ENCODE measurements at regions of chr16 and their contacts with region 1.

Region 1: DNA sequence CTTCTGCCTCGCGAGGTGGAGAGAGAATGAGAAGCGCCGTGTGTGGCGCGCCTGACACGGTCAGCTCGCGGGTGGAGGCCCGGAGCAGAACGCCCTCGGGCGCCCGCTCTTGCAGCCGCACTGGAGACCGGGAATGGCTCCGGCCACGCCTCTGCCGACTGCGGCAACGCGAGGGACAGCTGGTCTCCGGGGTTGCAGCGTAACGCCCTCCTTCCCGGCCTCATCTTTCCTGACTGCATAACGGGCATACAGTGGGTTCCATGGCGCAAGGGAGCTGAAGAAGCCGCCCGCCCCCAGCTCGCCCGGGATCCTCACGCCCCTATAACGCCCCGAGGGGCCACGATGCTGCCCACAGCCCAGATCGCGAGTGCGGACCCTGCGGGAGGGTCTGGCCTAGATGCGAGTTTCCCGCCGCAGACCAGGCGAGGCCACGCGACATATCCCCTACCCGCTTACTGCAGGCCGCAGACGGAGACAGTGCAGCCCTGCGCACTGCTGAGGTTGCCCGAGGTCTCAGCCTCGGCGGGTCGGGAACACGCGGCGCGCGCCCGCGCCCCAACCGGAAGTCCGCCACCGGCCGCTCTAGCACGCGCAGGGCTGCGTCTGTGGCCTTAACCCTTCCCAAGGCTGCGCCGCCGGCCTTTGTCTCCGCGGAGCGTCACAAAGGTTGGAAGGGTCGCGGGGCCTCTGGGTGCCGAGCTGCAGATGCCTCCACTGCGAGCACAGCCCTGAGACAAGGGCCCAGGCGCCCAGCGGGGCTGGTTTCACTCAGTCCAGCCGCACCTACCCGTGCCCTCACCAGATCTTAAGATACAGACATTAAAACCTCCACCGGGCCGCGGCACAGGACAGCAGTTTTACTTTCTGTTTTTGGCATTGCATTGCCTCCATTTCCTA is 18.8 kb downstream of the BCL7C start:
- DNase-seq: peak; percentile 97

Region 2: GRCh38 chr16:30775392-30776188 is 99.5 kb before region 1 on chr16:
- intact Hi-C with region 1: loop called (anchors 5 kb)
- DNase-seq: peak; percentile 90

Region 3: GRCh38 chr16:30829130-30830071 is 45.7 kb before region 1 on chr16:
- intact Hi-C with region 1: no loop called
- DNase-seq: no peak

Region 4: GRCh38 chr16:30948667-30949649 is 73.9 kb after region 1 on chr16 and contains the start of gene ORAI3:
- intact Hi-C with region 1: no loop called
- DNase-seq: peak; percentile 94
- total RNA-seq, gene ORAI3: 9.5 TPM